ENCODE measurements at regions of chr3 and their contacts with region 1.

Region 1: GRCh38 chr3:9302425-9303181 is 53.2 kb upstream of the SRGAP3 start:
- DNase-seq: peak; percentile 77
- H3K4me3 Mint-ChIP-seq: no peak overlapping the region
- H3K27ac Mint-ChIP-seq: no peak overlapping the region
- H3K4me1 Mint-ChIP-seq: peaks cover 13% of the 10 kb centered on the region
- H3K27me3 Mint-ChIP-seq: peaks cover 3% of the 10 kb centered on the region

Region 2: GRCh38 chr3:8987645-8988383 is 314.8 kb before region 1 on chr3:
- CTCF ChIA-PET with region 1: interaction called, 23 read pairs
- POLR2A ChIA-PET with region 1: no interaction called
- DNase-seq: peak; percentile 72
- H3K4me3 Mint-ChIP-seq: no peak overlapping the region
- H3K27ac Mint-ChIP-seq: no peak overlapping the region
- H3K4me1 Mint-ChIP-seq: peaks cover 4% of the 10 kb centered on the region
- H3K27me3 Mint-ChIP-seq: no peaks in the 10 kb centered on the region

Region 3: GRCh38 chr3:9536212-9536611 is 233.6 kb after region 1 on chr3:
- CTCF ChIA-PET with region 1: no interaction called
- POLR2A ChIA-PET with region 1: no interaction called
- DNase-seq: no peak
- H3K4me3 Mint-ChIP-seq: no peak overlapping the region
- H3K27ac Mint-ChIP-seq: no peak overlapping the region
- H3K4me1 Mint-ChIP-seq: no peaks in the 10 kb centered on the region
- H3K27me3 Mint-ChIP-seq: peaks cover 11% of the 10 kb centered on the region